ENCODE measurements at regions of chr11 and their contacts with region 1.

Region 1: GRCh38 chr11:107017433-107018227 is 646 bp downstream of the GUCY1A2 start:
- DNase-seq: no peak
- ATAC-seq: peak; percentile 90
- H3K4me3 ChIP-seq: peak overlapping the region; percentile 41 to 45
- H3K27ac ChIP-seq: no peak overlapping the region
- H3K4me1 ChIP-seq: peaks cover 5% of the 10 kb centered on the region
- H3K27me3 ChIP-seq: peaks cover 21% of the 10 kb centered on the region
- CTCF ChIP-seq: peak; percentile 88

Region 2: GRCh38 chr11:106724293-106724892 is 293.2 kb before region 1 on chr11:
- CTCF ChIA-PET with region 1: no interaction called
- POLR2A ChIA-PET with region 1: no interaction called
- in situ Hi-C with region 1: no loop called
- intact Hi-C with region 1: loop called (anchors 5 kb)
- DNase-seq: no peak
- ATAC-seq: no peak
- H3K4me3 ChIP-seq: no peak overlapping the region
- H3K27ac ChIP-seq: no peak overlapping the region
- H3K4me1 ChIP-seq: no peaks in the 10 kb centered on the region
- H3K27me3 ChIP-seq: no peaks in the 10 kb centered on the region
- CTCF ChIP-seq: no peak